Sciatic nerve (tissue), 2 donors: ENCODE measurements at regions of chr9 and their contacts with region 1.

Region 1: DNA sequence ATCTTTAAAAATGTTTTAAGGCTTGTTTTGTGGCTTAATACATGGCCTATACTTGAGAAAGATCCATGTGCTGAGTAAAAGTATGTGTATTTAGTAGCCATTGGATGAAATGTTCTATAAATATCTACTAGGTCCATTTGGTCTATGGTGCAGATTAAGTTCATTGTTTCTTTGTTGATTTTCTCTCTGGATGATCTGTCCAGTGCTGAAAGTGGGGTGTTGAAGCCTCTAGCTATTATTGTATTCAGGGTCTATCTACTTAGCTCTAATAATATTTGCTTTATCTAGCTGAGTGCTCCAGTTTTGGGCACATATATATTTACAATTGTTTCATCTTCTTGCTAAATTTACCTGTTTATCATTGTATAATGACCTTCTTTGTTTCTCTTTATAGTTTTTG is 272.2 kb upstream of the NR4A3 start:
- DNase-seq: no peak
- ATAC-seq: no peak

Region 2: DNA sequence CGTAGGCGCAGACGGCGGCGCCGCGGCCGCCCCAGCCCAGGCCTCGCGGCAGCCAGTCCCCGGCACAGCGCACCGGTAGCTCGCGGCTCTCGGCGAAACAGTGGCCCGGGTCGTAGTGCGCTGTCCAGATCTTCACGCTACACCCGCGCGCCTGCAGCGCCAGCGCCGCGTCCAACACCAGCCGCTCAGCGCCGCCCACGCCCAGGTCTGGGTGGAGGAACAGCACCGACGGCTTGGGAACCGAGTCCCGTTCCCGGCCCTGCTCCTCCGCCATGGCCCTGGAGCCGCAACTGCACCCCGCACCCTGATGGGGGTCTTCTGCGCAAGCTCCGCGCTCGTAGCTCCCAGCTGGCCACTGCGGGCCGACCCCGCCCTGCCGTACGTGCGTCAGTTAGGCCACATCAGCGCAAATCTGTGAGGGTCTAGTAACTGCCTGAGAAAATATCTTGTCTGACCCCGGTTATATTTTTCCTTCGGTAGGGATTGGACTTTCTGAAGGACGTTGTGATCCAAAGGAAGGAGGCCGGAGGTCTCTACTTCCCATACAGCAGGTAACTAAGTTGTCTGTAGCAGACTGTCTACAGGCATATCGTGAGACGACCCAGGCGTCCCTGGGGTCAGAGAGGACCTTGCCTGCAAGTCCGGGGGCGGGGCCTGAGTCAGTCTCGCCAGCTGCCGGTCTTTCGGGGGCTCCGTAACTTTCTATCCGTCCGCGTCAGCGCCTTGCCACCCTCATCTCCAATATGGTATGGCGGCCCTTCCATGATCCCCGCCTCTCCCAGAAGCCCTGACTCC is 327.6 kb before region 1 on chr9 and contains the starts of genes ALG2 and SEC61B:
- intact Hi-C with region 1: no loop called
- DNase-seq: peak; percentile 96
- ATAC-seq: peak; percentile 99
- total RNA-seq, gene ALG2: 19.7 TPM
- total RNA-seq, gene SEC61B: 86.3 TPM

Region 3: DNA sequence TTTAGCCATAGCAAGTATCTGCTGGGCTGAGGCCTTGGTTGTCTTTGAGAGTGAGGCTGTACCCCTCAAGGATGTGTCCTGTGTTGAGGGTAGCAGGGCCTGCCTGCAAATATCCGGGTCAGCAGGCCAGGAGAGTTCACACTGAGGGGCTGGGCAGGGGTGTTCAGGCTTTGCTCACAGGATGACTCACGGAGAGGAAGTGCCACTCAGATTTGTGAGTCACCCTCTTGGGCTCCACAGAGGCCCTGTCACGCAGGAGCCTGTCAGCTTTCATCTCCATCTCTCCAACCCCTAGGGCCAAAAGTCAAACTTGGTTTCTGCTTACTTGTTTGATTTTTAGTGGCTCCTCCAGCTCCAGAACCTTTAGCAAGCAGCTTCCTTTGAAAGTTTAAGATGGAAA is 115.9 kb before region 1 on chr9:
- intact Hi-C with region 1: no loop called
- DNase-seq: no peak
- ATAC-seq: no peak

Region 4: DNA sequence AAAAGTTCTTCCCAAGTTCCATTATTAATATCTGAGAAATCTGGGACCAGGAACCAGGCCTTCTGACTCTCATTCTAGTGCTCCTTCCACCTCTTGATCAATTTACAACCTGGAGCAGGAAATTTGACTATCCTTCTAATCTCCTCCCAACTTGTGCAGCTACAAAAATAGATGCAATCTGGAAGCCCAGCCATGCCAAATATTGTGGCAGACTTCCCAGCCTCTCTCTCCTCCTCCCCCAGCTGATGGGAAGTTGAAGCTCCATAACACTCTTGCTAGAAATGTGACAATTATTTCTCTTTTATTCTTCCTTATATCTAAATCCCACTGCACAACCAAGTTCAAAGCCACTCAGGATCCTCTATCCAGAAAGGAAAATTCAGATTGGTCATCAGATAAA is 75.3 kb before region 1 on chr9:
- intact Hi-C with region 1: no loop called
- DNase-seq: no peak
- ATAC-seq: no peak

Region 5: GRCh38 chr9:100794738-100795269 is 1245.4 kb after region 1 on chr9:
- intact Hi-C with region 1: loop called (anchors 5 kb)
- DNase-seq: no peak
- ATAC-seq: no peak